ENCODE measurements at regions of chr9 and their contacts with region 1.

Region 1: DNA sequence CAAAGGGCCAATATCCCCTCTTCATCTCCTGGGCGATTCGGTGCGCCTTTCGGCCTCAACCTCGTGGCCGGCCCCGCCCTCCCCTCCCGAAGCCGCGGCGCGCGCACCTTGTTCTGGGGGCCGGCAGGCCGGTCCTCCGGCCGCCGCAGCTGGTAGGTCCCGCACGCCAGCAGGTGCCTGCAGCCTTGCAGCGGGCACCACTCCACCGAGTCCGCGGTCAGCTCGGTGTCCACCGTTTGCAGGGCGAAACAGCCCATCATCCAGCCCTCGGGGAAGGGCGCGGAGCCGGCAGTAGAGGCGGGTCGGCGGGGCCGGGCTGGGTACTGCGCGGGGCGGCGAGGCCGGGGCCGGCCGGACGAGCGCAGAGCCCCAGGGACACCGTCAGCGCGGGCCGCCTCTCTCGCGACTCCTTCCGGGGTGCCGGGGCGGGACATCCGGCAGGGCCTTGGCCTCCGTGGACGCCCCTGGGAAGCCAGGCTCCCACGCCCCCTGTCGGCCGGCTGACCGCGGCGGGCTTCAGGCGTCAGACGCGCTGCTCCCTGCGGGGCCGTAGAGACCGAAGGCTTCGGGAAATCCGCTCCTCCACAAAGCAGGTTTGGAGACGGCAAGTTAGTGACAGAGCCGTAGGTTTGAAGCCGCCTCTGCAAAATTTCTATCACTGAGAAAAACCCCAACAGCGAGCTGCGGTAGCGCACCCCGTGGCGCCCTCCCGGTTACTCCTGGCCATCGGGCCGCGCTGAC is at the start of gene DPH7:
- DNase-seq: peak; percentile 92 to 99 (median 96)
- H3K4me3 ChIP-seq: peak within 1 kb of the TSS; percentile 60 to 100 (median 92)
- H3K27ac ChIP-seq: peak within 1 kb of the TSS in 55 of 59 donors; percentile 0 to 91 (median 74)
- H3K27me3 ChIP-seq: no peaks in the 10 kb centered on the region
- CTCF ChIP-seq: peak in 55 of 56 donors; percentile 85 to 100 (median 97)
- total RNA-seq, gene DPH7: 29.0 to 72.8 (median 45.7) TPM

Region 2: GRCh38 chr9:137618105-137619067 is 39.7 kb after region 1 on chr9 and contains the start of gene EHMT1:
- intact Hi-C with region 1: loop called (anchors 5 kb)
- DNase-seq: peak in 9 of 10 donors; percentile 64 to 93 (median 76)
- H3K4me3 ChIP-seq: peak within 1 kb of the TSS; percentile 68 to 100 (median 95)
- H3K27ac ChIP-seq: peak within 1 kb of the TSS in 58 of 59 donors; percentile 38 to 97 (median 89)
- H3K27me3 ChIP-seq: no peaks in the 10 kb centered on the region
- CTCF ChIP-seq: peak in 12 of 56 donors; percentile 7 to 33 (median 12)
- total RNA-seq, gene EHMT1: 47.9 to 151 (median 85.0) TPM